Left cardiac atrium (tissue), 4 donors: ENCODE measurements at regions of chr1 and their contacts with region 1.

Region 1: DNA sequence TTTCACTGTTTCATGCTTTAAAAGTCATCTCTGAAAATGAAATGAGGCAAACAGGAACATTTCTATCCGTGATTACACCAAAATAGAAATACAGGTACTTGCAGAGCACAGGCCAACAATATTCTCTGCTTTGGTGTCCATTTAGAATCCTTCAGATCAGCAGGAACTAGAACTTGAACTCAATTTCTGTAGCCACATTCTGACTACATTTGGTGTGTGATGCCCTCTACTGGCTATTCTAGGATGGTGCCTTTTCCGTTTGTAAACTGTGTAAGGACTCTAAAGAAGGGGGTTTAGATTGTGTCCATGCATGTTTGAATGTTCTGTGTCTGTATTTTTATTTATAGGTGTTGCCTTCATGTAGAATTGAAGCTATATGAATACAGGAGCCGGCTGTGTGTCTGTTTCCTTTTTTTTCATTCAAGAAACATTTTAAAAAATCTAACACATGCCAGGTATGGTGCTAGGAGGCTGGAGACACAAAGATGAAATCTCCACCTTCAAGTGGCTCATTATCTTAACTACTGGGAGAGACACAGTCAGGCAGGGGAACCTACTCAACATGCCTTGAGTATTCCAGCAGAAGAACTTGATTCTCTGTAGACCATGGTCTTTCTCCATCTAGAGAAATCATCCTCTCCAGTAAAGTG is 7.6 kb upstream of the ZNF326 start:
- DNase-seq: no peak
- ATAC-seq: peak; percentile 89 to 90

Region 2: GRCh38 chr1:89804642-89805237 is 182.6 kb before region 1 on chr1:
- intact Hi-C with region 1: loop called (anchors 1 to 5 kb)
- DNase-seq: peak; percentile 84
- ATAC-seq: peak; percentile 90 to 92

Region 3: DNA sequence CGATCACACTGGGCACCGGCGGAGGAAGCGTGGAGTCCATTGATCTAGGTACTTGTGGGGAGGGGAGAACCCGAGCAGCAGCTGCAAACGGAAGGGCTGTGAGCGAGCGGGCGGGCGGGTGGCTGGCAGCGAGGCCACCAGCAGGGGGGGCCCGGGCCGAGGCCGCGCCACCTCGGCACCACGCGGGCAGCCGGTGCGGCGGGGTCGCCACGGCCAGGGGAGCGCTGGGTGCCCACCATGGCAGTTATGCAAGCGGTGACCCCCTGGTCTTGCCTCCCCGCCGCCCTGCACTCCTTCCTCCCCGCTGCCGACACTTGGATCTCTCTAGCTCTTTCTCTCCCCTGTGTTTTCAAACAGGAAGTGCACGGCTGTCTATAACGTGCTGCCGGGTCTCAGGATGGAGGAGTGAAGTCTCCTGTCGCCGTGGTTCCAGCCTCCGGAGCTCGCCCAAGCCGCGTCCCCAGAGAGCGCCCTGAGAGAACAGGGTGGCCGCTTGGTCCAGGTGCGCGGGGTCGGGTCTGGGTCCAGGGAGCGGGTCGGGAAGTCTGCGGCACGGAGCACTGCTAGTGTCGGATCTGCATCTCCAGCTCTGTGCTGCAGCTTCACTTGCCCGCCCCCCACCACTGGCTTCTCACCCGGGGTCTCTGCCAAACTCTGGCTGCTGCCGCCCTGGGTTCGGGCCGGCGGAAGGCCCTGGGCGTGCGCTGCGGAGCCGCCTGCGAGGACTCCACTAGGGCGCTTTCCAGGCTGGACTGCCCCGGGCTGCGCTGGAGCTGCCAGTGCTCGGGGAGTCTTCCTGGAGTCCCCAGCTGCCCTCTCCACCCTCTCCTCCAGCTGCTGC is 143.8 kb before region 1 on chr1:
- intact Hi-C with region 1: loop called in 1 of 2 experiments (anchors 2 kb)
- DNase-seq: peak; percentile 73
- ATAC-seq: peak; percentile 94 to 97

Region 4: DNA sequence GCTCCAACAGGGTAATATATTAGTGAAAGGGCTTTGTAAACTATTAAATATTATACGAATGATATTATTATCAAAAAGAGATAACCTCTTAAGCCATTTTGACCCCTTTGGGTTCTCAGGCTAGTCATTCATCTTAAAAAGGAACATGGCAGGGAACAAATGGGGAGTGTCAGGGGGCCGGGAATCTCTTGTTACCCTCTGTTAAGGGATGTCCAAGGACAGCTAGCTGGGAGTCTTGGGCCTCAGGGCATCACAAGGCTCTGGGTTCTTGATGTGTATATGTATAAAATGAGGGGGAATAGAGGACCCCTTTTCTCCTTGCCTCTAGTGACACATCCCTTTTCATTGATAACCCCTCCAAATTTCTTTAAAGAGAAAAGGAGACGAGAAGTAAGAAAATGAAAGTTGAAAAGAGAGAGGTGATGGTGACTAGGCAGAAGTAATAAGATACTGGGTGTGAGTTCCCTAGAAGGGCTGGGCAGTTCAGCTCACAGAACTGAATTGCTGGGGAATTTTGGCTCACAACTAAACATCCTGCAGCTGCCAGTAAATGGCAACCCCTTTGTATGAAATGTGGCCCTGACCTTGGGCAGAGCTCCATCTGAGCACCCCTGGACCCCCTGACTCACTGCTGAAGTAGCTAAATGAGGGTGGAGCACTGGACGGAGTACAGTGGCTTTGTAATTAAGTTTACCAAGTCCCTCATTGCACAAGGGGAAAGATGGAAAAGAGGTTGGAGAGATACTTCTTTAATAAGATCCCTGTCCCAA is 12.4 kb before region 1 on chr1:
- intact Hi-C with region 1: no loop called
- DNase-seq: no peak
- ATAC-seq: peak in 1 of 2 donors; percentile 53